Activated naive CD4-positive, alpha-beta T cell treated with anti-CD3 and anti-CD28 coated beads for 36 hours (primary cell): ENCODE measurements at regions of chr13 and their contacts with region 1.

Region 1: GRCh38 chr13:79480954-79481684 is at the start of gene NDFIP2:
- DNase-seq: peak; percentile 86
- H3K4me3 Mint-ChIP-seq: peak within 1 kb of the TSS; percentile 86
- H3K27ac Mint-ChIP-seq: peak within 1 kb of the TSS; percentile 97
- H3K4me1 Mint-ChIP-seq: peaks cover 49% of the 10 kb centered on the region
- H3K27me3 Mint-ChIP-seq: no peaks in the 10 kb centered on the region
- total RNA-seq, gene NDFIP2: 89.5 to 90.8 TPM

Region 2: DNA sequence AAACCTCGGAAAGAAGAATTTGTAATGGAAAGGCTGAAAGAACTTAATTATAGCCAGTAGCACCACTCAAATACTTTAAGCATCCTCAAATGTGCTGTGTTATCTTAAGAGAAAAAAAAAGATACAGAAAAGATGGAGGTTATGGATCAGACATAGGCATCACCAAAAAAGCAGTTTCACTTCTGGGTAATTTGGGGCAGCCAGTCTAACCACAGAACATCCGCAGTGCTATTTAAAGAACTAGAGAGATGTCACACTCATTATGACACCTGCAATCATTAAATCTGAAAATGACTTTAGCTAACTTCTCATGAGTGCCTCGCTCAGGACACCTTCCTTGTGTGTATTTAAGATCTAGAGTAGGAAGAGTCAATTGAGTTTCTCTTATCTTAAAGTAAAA is 286.8 kb before region 1 on chr13:
- CTCF ChIA-PET with region 1: no interaction called
- intact Hi-C with region 1: loop called (anchors 1 kb)
- DNase-seq: peak; percentile 76
- H3K4me3 Mint-ChIP-seq: no peak overlapping the region
- H3K27ac Mint-ChIP-seq: no peak overlapping the region
- H3K4me1 Mint-ChIP-seq: peaks cover 40% of the 10 kb centered on the region
- H3K27me3 Mint-ChIP-seq: no peaks in the 10 kb centered on the region

Region 3: DNA sequence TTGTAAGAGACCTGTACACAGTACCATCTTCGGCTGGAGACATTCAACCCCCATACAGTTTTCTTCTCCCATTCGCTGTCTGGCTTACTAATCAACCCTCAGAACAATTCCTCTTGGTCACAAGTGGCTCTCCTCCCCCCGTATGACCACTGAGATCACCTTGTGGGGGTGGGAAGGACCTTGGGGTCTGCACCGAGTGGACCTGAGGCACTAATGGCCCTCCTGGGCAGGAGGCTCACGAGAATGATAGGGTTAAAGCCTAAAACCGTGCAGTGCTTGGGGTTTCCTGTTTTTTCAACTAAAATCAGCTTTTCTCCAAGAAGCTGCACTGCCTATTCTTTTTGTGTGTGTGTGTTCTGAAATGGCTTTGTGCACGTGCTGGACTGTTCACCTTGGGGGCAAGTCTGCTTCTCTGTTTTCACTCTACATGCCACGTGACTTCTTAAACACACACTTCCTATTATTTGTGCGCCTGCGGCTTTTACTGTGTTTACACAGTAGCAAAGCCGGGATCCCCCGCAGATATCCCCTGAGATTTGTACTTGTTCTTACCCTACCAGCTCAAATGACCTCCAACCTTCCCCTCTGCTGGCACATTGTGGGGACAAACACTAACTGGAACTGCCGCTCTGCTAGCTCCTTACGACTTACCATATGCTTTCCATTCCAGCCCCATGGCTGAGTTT is 87.4 kb before region 1 on chr13:
- CTCF ChIA-PET with region 1: interaction called, 3 read pairs
- intact Hi-C with region 1: loop called (anchors 1 kb)
- DNase-seq: peak; percentile 45
- H3K4me3 Mint-ChIP-seq: peak overlapping the region; percentile 50
- H3K27ac Mint-ChIP-seq: peak overlapping the region; percentile 60
- H3K4me1 Mint-ChIP-seq: peaks cover 64% of the 10 kb centered on the region
- H3K27me3 Mint-ChIP-seq: no peaks in the 10 kb centered on the region

Region 4: DNA sequence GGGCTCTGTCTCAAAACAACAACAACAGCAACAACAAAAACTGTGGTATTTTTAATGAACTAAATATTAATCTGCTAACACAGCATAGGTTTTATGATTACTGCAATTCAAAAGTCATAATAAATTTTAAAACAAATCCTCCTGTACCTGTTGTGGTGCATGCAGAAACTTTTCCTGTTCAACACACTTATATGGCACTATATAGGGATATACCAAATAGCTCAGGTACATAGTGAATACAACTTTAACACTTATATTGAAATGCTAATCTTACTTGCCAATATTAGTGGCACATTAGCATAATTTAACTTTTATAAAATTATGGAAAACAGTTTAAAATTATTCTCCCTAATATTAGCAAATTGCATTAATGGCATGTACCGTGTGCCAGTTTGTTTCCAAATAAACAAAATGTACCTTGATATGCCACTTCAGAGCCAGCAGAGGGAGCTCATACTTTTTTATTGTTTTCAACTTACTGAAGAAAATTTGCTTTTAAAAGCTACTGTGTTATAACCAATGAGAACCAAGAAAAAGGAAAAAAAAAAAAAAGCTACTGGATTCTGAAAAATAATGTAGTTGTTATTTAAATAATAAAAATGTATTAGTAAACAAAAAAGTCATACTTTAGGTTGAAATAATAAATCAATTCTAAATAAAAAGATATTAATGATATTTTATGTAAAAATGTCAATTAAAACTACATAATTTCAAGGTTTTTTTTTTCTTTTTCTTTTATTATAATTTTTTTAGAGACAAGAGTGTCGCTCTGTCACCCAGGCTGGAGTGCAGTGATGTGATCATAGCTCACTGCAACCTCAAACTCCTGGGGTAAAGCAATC is 57.1 kb before region 1 on chr13:
- CTCF ChIA-PET with region 1: interaction called, 18 read pairs
- intact Hi-C with region 1: loop called (anchors 1 kb)
- DNase-seq: no peak
- H3K4me3 Mint-ChIP-seq: no peak overlapping the region
- H3K27ac Mint-ChIP-seq: no peak overlapping the region
- H3K4me1 Mint-ChIP-seq: peaks cover 3% of the 10 kb centered on the region
- H3K27me3 Mint-ChIP-seq: no peaks in the 10 kb centered on the region

Region 5: GRCh38 chr13:79468819-79469218 is 12.3 kb before region 1 on chr13:
- CTCF ChIA-PET with region 1: interaction called, 4 read pairs
- intact Hi-C with region 1: loop called (anchors 1 kb)
- DNase-seq: no peak
- H3K4me3 Mint-ChIP-seq: no peak overlapping the region
- H3K27ac Mint-ChIP-seq: no peak overlapping the region
- H3K4me1 Mint-ChIP-seq: peaks cover 10% of the 10 kb centered on the region
- H3K27me3 Mint-ChIP-seq: no peaks in the 10 kb centered on the region

Region 6: DNA sequence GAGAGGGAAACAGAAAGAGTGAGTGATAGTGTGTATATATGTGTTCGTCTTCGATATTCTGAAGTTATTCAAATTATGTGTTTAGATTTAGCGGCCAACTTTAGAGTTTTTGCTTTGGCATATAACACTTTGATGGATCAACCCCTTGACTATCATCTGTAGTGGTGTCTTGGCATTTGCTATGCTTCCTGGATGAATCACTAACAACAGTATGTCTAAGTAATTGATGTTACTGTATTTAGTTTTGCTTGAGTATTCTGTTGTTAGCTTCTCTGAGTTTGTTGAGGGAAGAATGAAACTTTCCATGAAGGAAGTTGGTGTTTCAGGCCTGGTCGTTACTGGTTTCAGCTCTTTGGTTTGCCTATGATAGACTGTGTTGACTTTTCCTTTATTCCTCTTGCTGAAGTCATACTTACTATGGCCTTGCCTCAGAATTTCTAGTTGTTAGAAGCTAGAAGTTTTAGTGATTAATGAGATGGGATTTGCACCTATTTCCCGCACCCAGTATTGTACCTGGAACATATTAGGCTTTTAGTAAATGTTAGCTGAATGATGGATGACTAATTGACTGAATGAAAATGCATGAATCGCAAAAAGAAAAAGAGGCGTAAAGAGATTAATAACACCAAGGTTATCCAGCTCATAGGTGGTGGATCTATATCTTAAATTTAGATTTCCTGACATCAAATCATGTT is 20.6 kb after region 1 on chr13:
- CTCF ChIA-PET with region 1: interaction called, 25 read pairs
- intact Hi-C with region 1: loop called (anchors 1 kb)
- DNase-seq: no peak
- H3K4me3 Mint-ChIP-seq: peak overlapping the region; percentile 17
- H3K27ac Mint-ChIP-seq: peak overlapping the region; percentile 81
- H3K4me1 Mint-ChIP-seq: peaks cover 83% of the 10 kb centered on the region
- H3K27me3 Mint-ChIP-seq: no peaks in the 10 kb centered on the region

Region 7: GRCh38 chr13:80048802-80049201 is 567.7 kb after region 1 on chr13:
- CTCF ChIA-PET with region 1: no interaction called
- intact Hi-C with region 1: loop called (anchors 10 kb)
- DNase-seq: peak; percentile 81
- H3K4me3 Mint-ChIP-seq: no peak overlapping the region
- H3K27ac Mint-ChIP-seq: no peak overlapping the region
- H3K4me1 Mint-ChIP-seq: peaks cover 10% of the 10 kb centered on the region
- H3K27me3 Mint-ChIP-seq: peaks cover 5% of the 10 kb centered on the region